Activated CD4-positive, alpha-beta T cell treated with anti-CD3 and anti-CD28 coated beads, Interleukin-2, amount 10 ng/mL, durations not matched to agents 7 days and 5 days (primary cell): ENCODE measurements at regions of chr3 and their contacts with region 1.

Region 1: DNA sequence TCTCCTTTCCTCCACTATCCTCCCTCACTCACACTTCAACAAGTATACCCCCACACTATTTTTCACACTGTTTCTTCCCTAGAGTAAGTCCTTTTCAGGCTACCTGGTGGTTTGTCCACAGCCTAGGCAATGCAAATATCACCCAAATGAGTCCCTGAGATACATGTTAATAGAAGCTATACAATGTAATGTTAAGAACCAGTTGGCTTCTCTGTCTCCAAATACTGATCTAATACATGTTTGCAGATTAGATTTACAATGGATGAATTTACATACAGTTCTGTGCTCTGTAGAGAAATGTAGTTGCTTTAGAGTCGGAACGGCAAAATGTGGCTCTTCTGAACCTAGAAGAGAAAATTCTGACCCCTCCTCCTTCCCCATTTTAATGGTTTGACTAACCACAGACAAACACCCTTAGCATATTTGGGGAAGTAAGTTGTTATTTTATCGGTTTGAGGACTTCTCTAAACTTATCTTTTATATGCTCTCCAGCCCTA is 63.6 kb upstream of the MBNL1 start:
- DNase-seq: peak; percentile 30
- H3K4me3 Mint-ChIP-seq: peak overlapping the region; percentile 73
- H3K27ac Mint-ChIP-seq: peak overlapping the region; percentile 88
- H3K4me1 Mint-ChIP-seq: peaks cover 73% of the 10 kb centered on the region
- H3K27me3 Mint-ChIP-seq: no peaks in the 10 kb centered on the region

Region 2: GRCh38 chr3:152219216-152219615 is 14.1 kb after region 1 on chr3:
- CTCF ChIA-PET with region 1: interaction called, 19 read pairs
- POLR2A ChIA-PET with region 1: no interaction called
- DNase-seq: no peak
- H3K4me3 Mint-ChIP-seq: peak overlapping the region; percentile 50
- H3K27ac Mint-ChIP-seq: peak overlapping the region; percentile 84
- H3K4me1 Mint-ChIP-seq: peaks cover 62% of the 10 kb centered on the region
- H3K27me3 Mint-ChIP-seq: no peaks in the 10 kb centered on the region